ENCODE measurements at regions of chr7 and their contacts with region 1.

Region 1: DNA sequence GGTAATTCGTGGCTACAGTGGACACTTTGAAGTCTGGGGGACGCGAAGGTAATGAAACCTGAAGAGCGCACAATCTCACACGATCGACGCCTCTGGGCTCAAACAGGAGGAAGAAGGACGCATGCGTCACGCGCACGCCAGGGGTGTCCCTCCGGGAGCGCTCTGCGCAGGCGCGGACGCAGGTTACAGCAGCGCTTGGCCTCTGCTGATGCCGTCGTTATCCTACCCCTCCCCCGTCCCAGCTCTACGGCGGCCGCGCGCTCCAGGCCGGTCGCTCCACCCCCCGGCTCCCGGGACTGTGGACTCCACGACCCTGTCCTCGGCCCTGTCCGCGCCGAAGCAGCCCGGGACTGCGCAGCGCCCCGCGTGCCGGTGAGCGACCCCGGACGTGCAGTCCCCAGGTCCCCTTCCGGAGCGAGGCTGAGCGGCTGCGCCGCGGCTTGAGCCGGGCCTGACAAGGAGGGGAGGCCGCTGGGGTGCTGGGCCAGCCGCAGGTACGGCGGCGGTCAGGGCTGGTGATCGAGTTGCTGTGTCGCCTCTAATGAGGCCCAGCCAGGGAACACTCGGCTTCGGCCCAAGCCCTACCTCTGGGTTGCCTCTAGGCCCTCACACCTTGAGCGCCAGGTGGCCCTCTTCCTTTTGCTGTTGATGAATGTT is at the start of gene TMEM106B:
- DNase-seq: peak; percentile 96
- ATAC-seq: peak; percentile 94
- H3K4me3 ChIP-seq: peak within 1 kb of the TSS; percentile 83 to 90
- H3K27ac ChIP-seq: peak within 1 kb of the TSS; percentile 100
- H3K4me1 ChIP-seq: peaks cover 58% of the 10 kb centered on the region
- H3K27me3 ChIP-seq: no peaks in the 10 kb centered on the region
- CTCF ChIP-seq: no peak; the same call in 1 of the 2 replicates
- total RNA-seq, gene TMEM106B: 89.0 TPM

Region 2: DNA sequence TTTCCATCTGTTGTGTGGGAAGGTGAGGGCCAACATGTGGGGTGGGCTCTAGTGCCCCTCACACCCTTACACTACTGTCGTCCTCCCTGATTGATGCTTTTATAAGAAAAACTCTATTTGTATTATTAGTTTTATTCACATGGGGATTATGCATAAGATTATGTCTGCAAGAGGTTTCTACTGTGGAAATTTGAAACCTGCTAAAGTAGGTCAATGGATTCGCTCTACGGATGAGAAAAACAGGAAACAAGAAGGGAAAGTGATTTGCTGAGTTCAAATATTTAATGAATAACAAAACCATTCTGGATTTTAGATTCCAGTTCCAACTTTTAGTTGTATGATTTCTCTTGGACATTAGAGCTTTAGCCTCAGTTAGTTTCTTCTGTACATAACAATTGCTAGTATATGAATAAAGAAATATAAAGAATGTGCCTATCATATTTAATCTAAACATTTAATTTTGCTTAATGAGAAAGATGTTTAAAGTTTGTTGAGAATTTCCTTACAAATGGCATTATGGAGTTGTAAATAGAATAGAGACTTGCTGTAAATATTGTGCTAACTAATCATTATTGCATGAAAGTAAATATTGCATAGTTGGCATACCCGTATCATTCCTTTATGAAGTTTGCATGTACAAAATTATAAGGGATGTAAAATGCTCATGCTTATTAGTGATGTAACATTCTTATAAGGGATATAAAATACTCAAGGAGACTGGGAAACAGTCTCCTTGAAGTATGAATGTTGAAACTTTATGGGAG is 573.0 kb before region 1 on chr7:
- CTCF ChIA-PET with region 1: no interaction called
- POLR2A ChIA-PET with region 1: interaction called, 12 read pairs
- in situ Hi-C with region 1: no loop called
- intact Hi-C with region 1: no loop called
- DNase-seq: no peak
- ATAC-seq: no peak
- H3K4me3 ChIP-seq: no peak overlapping the region
- H3K27ac ChIP-seq: no peak overlapping the region
- H3K4me1 ChIP-seq: 0 out of 2 replicates have a peak, but pooled peaks cover 4% of the 10 kb centered on the region
- H3K27me3 ChIP-seq: no peaks in the 10 kb centered on the region
- CTCF ChIP-seq: no peak

Region 3: GRCh38 chr7:11896663-11897062 is 314.5 kb before region 1 on chr7:
- CTCF ChIA-PET with region 1: no interaction called
- POLR2A ChIA-PET with region 1: no interaction called
- in situ Hi-C with region 1: no loop called
- intact Hi-C with region 1: no loop called
- DNase-seq: no peak
- ATAC-seq: no peak
- H3K4me3 ChIP-seq: no peak overlapping the region
- H3K27ac ChIP-seq: no peak overlapping the region
- H3K4me1 ChIP-seq: no peaks in the 10 kb centered on the region; the same call in 1 of the 2 replicates
- H3K27me3 ChIP-seq: no peaks in the 10 kb centered on the region
- CTCF ChIP-seq: no peak

Region 4: GRCh38 chr7:12111422-12112405 is 99.5 kb before region 1 on chr7:
- CTCF ChIA-PET with region 1: no interaction called
- POLR2A ChIA-PET with region 1: no interaction called
- in situ Hi-C with region 1: no loop called
- intact Hi-C with region 1: loop called (anchors 5 kb)
- DNase-seq: peak; percentile 67
- ATAC-seq: peak; percentile 93
- H3K4me3 ChIP-seq: peak overlapping the region; percentile 57 to 63
- H3K27ac ChIP-seq: peak overlapping the region; percentile 97
- H3K4me1 ChIP-seq: peaks cover 47% of the 10 kb centered on the region
- H3K27me3 ChIP-seq: no peaks in the 10 kb centered on the region
- CTCF ChIP-seq: peak; percentile 75

Region 5: DNA sequence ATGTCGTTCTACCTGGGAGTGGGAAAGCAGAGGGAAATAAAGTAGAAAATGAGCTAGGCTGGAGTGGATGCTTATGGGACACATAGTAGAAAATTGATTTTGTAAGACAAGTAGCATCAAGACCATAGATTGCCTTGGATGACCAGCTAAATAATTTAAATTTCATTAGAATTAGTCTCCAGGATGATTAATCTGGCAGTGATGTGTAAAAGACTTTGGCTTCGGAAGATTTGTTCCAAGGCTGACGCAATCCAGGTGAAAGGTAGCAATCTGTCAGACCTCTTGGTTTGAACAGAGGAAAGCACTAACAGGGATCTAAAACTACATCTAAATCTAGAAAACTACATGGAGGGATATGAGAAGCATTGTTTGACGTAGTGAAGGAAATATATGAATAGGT is 712.8 kb after region 1 on chr7:
- CTCF ChIA-PET with region 1: no interaction called
- POLR2A ChIA-PET with region 1: no interaction called
- in situ Hi-C with region 1: no loop called
- intact Hi-C with region 1: no loop called
- DNase-seq: peak; percentile 13
- ATAC-seq: no peak
- H3K4me3 ChIP-seq: no peak overlapping the region
- H3K27ac ChIP-seq: no peak overlapping the region
- H3K4me1 ChIP-seq: no peaks in the 10 kb centered on the region
- H3K27me3 ChIP-seq: no peaks in the 10 kb centered on the region
- CTCF ChIP-seq: no peak